CD4-positive, alpha-beta memory T cell (primary cell): ENCODE measurements at regions of chr3 and their contacts with region 1.

Region 1: DNA sequence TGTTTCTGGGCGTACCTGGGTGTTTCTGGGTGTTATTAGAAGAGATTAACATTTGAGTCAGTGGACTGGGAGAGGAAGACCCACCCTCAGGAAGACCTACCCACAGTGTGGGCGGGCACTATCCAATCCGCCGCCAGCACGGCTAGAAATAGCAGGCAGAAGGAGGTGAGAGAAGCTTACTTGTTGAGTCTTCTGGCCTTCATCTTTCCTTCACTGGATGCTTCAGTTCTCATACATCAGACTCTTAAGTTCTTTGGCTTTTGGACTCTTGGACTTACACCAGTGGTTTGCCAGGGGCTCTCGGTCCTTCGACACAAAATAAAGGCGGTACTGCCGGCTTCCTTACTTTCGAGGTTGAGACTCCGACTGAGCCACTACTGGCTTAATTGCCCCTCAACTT is 654.6 kb upstream of the CADM2 start:
- DNase-seq: no peak
- H3K4me3 ChIP-seq: no peak overlapping the region
- H3K4me3 Mint-ChIP-seq: no peak overlapping the region
- H3K27ac ChIP-seq: no peak overlapping the region
- H3K27ac Mint-ChIP-seq: no peak overlapping the region
- H3K4me1 ChIP-seq: no peaks in the 10 kb centered on the region
- H3K4me1 Mint-ChIP-seq: no peaks in the 10 kb centered on the region
- H3K27me3 ChIP-seq: no peaks in the 10 kb centered on the region
- H3K27me3 Mint-ChIP-seq: no peaks in the 10 kb centered on the region

Region 2: GRCh38 chr3:84318273-84318809 is 14.1 kb after region 1 on chr3:
- CTCF ChIA-PET with region 1: no interaction called
- POLR2A ChIA-PET with region 1: no interaction called
- intact Hi-C with region 1: loop called (anchors 1 kb)
- DNase-seq: no peak
- H3K4me3 ChIP-seq: no peak overlapping the region
- H3K4me3 Mint-ChIP-seq: no peak overlapping the region
- H3K27ac ChIP-seq: no peak overlapping the region
- H3K27ac Mint-ChIP-seq: no peak overlapping the region
- H3K4me1 ChIP-seq: no peaks in the 10 kb centered on the region
- H3K4me1 Mint-ChIP-seq: no peaks in the 10 kb centered on the region
- H3K27me3 ChIP-seq: no peaks in the 10 kb centered on the region
- H3K27me3 Mint-ChIP-seq: no peaks in the 10 kb centered on the region

Region 3: GRCh38 chr3:84586311-84586826 is 282.2 kb after region 1 on chr3:
- CTCF ChIA-PET with region 1: no interaction called
- POLR2A ChIA-PET with region 1: no interaction called
- intact Hi-C with region 1: no loop called
- DNase-seq: no peak
- H3K4me3 ChIP-seq: no peak overlapping the region
- H3K4me3 Mint-ChIP-seq: no peak overlapping the region
- H3K27ac ChIP-seq: no peak overlapping the region
- H3K27ac Mint-ChIP-seq: no peak overlapping the region
- H3K4me1 ChIP-seq: no peaks in the 10 kb centered on the region
- H3K4me1 Mint-ChIP-seq: no peaks in the 10 kb centered on the region
- H3K27me3 ChIP-seq: no peaks in the 10 kb centered on the region
- H3K27me3 Mint-ChIP-seq: no peaks in the 10 kb centered on the region